ENCODE measurements at regions of chr4 and their contacts with region 1.

Region 1: GRCh38 chr4:26410385-26411293 is 79.6 kb downstream of the CCKAR start:
- DNase-seq: no peak
- H3K4me3 ChIP-seq: no peak overlapping the region
- H3K27ac ChIP-seq: no peak overlapping the region
- H3K4me1 ChIP-seq: peaks cover 0 to 21% (median 9%) of the 10 kb centered on the region in 6 donors
- H3K27me3 ChIP-seq: no peaks in the 10 kb centered on the region
- CTCF ChIP-seq: peak; percentile 33 to 74 (median 64)
- POLR2A ChIP-seq: no peak

Region 2: GRCh38 chr4:26130173-26130572 is 280.5 kb before region 1 on chr4:
- intact Hi-C with region 1: no loop called
- DNase-seq: no peak
- H3K4me3 ChIP-seq: no peak overlapping the region
- H3K27ac ChIP-seq: no peak overlapping the region
- H3K4me1 ChIP-seq: peaks cover 0 to 3% (median 0%) of the 10 kb centered on the region in 6 donors
- H3K27me3 ChIP-seq: no peaks in the 10 kb centered on the region
- CTCF ChIP-seq: no peak
- POLR2A ChIP-seq: no peak

Region 3: GRCh38 chr4:26267087-26267486 is 143.6 kb before region 1 on chr4:
- intact Hi-C with region 1: no loop called
- DNase-seq: no peak
- H3K4me3 ChIP-seq: no peak overlapping the region
- H3K27ac ChIP-seq: no peak overlapping the region
- H3K4me1 ChIP-seq: peaks cover 0 to 24% (median 2%) of the 10 kb centered on the region in 6 donors
- H3K27me3 ChIP-seq: no peaks in the 10 kb centered on the region
- CTCF ChIP-seq: no peak
- POLR2A ChIP-seq: no peak

Region 4: DNA sequence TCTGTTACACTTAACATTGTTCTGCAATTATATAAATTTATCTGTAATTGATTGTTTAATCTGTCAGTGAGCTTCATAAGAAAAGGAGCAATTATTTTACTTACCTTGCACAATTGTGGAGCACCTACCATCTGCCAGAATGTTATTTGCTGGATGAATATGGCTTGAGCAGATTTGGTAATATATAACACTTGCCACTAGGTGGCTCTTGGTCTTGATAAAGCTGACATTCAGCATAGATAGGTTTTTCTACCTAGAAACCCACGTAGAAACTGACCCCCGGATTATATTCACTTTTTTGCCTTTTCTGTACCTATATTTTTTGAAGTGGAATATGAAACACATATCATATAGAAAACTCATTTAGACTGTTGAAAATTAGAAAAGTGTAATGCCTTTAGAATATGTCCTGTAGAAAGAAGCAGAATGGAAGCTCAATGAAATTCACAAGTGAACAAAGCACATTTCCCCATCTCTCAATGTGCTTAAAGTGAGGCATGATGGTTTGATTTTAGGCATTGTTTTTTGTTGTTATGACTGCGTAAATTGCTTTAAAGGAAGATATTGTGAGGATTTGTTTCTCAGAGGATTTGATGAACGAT is 80.4 kb before region 1 on chr4:
- intact Hi-C with region 1: loop called (anchors 5 kb)
- DNase-seq: no peak
- H3K4me3 ChIP-seq: no peak overlapping the region
- H3K27ac ChIP-seq: no peak overlapping the region
- H3K4me1 ChIP-seq: peaks cover 11 to 96% (median 35%) of the 10 kb centered on the region in 6 donors
- H3K27me3 ChIP-seq: no peaks in the 10 kb centered on the region
- CTCF ChIP-seq: peak; percentile 12 to 78 (median 68)
- POLR2A ChIP-seq: no peak